B cell (primary cell): ENCODE measurements at regions of chr20 and their contacts with region 1.

Region 1: DNA sequence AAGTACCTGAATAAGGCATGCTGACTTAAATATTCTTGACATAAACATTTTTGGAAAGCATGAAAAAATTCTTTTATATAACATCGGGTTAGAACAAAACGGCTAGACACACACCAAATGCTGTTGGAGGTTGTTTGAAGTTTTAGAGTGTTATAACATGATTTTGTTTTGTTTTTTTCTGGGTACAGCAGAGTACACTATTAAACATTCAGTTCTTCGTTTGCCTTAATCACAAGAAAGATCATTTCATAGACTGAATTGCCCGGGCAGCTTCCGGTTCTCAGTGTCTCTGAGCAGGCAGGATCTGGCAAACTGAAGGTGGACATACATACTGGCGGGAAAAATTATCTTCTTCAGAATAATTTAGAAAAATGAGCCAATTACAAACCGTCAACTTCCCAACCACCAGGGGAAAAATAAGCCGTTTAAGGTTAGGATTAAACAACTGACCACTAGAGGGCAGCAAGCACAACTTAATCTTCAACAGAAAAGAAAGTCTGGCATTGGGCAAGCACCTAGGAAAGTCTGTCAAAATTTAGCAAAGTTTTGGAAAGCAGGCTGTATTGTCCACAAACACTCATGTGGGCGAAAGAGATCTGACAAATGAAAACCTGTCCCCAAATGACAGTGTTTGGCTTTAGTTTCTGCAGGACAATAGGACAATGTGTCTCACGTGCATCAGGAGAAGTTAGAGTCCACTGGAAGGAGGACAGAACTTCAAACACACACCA is 15.0 kb downstream of the ZNF217 start:
- DNase-seq: peak; percentile 91
- ATAC-seq: peak; percentile 62
- H3K4me3 ChIP-seq: peak overlapping the region in 1 of 5 experiments; percentile 45
- H3K4me3 Mint-ChIP-seq: peak overlapping the region; percentile 73
- H3K27ac ChIP-seq: peak overlapping the region; percentile 54 to 77
- H3K27ac Mint-ChIP-seq: peak overlapping the region; percentile 93
- H3K4me1 ChIP-seq: peaks cover 53 to 58% of the 10 kb centered on the region in 2 donors
- H3K4me1 Mint-ChIP-seq: peaks cover 54% of the 10 kb centered on the region
- H3K27me3 ChIP-seq: no peaks in the 10 kb centered on the region
- H3K27me3 Mint-ChIP-seq: no peaks in the 10 kb centered on the region
- CTCF ChIP-seq: peak; percentile 94

Region 2: DNA sequence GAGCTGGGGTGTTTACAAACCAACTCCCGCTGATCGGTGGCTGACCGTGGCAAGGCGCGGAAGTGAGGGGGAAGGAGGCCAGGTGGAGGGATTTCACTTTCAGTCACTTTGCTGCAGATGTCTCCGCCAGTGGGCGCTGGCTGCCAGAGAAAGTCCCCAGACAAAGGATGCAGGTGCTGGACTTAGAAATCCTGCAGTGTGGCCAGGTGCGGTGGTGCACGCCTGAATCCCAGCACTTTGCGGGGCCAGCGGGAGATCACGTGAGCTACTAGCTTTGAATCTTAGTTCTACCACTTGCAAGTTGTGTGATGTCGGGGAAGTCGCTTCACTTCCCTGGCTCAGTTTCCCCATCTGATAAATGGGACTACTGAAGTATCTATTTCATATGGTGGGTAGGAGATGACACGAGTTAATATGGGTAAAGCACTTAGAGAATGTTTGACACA is 165.4 kb before region 1 on chr20:
- CTCF ChIA-PET with region 1: interaction called, 3 read pairs
- POLR2A ChIA-PET with region 1: no interaction called
- intact Hi-C with region 1: loop called (anchors 10 kb)
- DNase-seq: peak; percentile 72
- ATAC-seq: peak; percentile 56
- H3K4me3 ChIP-seq: peak overlapping the region in 1 of 5 experiments; percentile 10
- H3K4me3 Mint-ChIP-seq: peak overlapping the region; percentile 56
- H3K27ac ChIP-seq: no peak overlapping the region
- H3K27ac Mint-ChIP-seq: peak overlapping the region; percentile 0
- H3K4me1 ChIP-seq: peaks cover 0 to 8% of the 10 kb centered on the region in 2 donors
- H3K4me1 Mint-ChIP-seq: peaks cover 5% of the 10 kb centered on the region
- H3K27me3 ChIP-seq: peaks cover 0 to 4% (median 0%) of the 10 kb centered on the region in 4 experiments
- H3K27me3 Mint-ChIP-seq: no peaks in the 10 kb centered on the region
- CTCF ChIP-seq: peak; percentile 62

Region 3: GRCh38 chr20:53750827-53751619 is 172.4 kb after region 1 on chr20:
- CTCF ChIA-PET with region 1: interaction called, 3 read pairs
- POLR2A ChIA-PET with region 1: no interaction called
- intact Hi-C with region 1: loop called (anchors 1 kb)
- DNase-seq: peak; percentile 78
- ATAC-seq: peak; percentile 87
- H3K4me3 ChIP-seq: peak overlapping the region in 1 of 5 experiments; percentile 18
- H3K4me3 Mint-ChIP-seq: peak overlapping the region; percentile 69
- H3K27ac ChIP-seq: peak overlapping the region; percentile 75 to 87
- H3K27ac Mint-ChIP-seq: peak overlapping the region; percentile 95
- H3K4me1 ChIP-seq: peaks cover 64 to 71% of the 10 kb centered on the region in 2 donors
- H3K4me1 Mint-ChIP-seq: peaks cover 60% of the 10 kb centered on the region
- H3K27me3 ChIP-seq: no peaks in the 10 kb centered on the region
- H3K27me3 Mint-ChIP-seq: no peaks in the 10 kb centered on the region
- CTCF ChIP-seq: no peak

Region 4: DNA sequence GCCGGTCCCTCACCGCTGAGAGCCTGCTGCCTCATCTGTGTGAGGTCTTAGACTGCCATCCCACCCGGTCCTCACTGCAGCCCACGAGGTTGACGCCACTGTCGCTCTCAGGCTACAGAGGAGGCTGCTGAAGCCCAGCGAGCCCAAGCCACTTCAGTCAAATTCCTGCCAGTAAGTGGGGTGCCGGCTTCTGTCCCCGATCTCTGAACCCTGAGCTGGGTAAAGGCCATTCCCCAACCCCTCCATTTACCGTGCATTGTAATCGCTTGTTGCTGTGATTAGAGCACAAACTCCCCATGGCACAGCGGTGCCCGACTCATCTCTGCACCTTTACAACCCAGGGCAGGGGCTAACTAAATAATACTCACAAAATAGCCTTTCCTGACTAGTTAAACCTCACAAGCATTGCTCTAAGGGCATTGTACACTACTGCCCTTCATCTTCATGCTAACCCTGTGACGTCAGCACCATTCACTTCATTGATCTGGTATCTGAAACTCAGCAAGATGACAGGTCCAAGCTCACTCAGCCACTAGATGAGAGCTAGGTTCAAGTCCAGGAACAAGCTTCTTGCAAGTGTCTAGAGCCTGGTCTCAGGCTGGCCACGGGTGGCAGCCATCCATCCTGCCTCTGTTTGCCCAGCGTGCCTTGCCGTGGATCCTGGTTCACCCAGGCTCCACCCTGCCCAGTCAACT is 369.0 kb after region 1 on chr20:
- CTCF ChIA-PET with region 1: interaction called, 137 read pairs
- POLR2A ChIA-PET with region 1: interaction called, 16 read pairs
- intact Hi-C with region 1: no loop called
- DNase-seq: no peak
- ATAC-seq: no peak
- H3K4me3 ChIP-seq: no peak overlapping the region
- H3K4me3 Mint-ChIP-seq: no peak overlapping the region
- H3K27ac ChIP-seq: no peak overlapping the region
- H3K27ac Mint-ChIP-seq: no peak overlapping the region
- H3K4me1 ChIP-seq: peaks cover 26 to 34% of the 10 kb centered on the region in 2 donors
- H3K4me1 Mint-ChIP-seq: peaks cover 34% of the 10 kb centered on the region
- H3K27me3 ChIP-seq: no peaks in the 10 kb centered on the region
- H3K27me3 Mint-ChIP-seq: no peaks in the 10 kb centered on the region
- CTCF ChIP-seq: no peak

Region 5: GRCh38 chr20:54207743-54208547 is 629.3 kb after region 1 on chr20 and contains the start of gene PFDN4:
- CTCF ChIA-PET with region 1: no interaction called
- POLR2A ChIA-PET with region 1: no interaction called
- intact Hi-C with region 1: loop called (anchors 10 kb)
- DNase-seq: peak; percentile 94
- ATAC-seq: peak; percentile 94
- H3K4me3 ChIP-seq: peak within 1 kb of the TSS; percentile 59 to 94 (median 84)
- H3K4me3 Mint-ChIP-seq: peak within 1 kb of the TSS; percentile 100
- H3K27ac ChIP-seq: peak within 1 kb of the TSS; percentile 92 to 97
- H3K27ac Mint-ChIP-seq: peak within 1 kb of the TSS; percentile 100
- H3K4me1 ChIP-seq: peaks cover 11 to 12% of the 10 kb centered on the region in 2 donors
- H3K4me1 Mint-ChIP-seq: peaks cover 29% of the 10 kb centered on the region
- H3K27me3 ChIP-seq: no peaks in the 10 kb centered on the region
- H3K27me3 Mint-ChIP-seq: no peaks in the 10 kb centered on the region
- CTCF ChIP-seq: peak; percentile 80
- total RNA-seq, gene PFDN4: 16.8 and 18.0 TPM in 2 replicates